Posterior vena cava (tissue), 2 donors: ENCODE measurements at regions of chr4 and their contacts with region 1.

Region 1: GRCh38 chr4:173135241-173135847 is 33.3 kb upstream of the GALNT7 start:
- DNase-seq: no peak

Region 2: GRCh38 chr4:172096786-172097185 is 1038.6 kb before region 1 on chr4:
- intact Hi-C with region 1: loop called in 1 of 2 experiments (anchors 5 kb)
- DNase-seq: no peak

Region 3: GRCh38 chr4:173209473-173209915 is 74.2 kb after region 1 on chr4:
- intact Hi-C with region 1: loop called in 1 of 2 experiments (anchors 2 kb)
- DNase-seq: no peak

Region 4: DNA sequence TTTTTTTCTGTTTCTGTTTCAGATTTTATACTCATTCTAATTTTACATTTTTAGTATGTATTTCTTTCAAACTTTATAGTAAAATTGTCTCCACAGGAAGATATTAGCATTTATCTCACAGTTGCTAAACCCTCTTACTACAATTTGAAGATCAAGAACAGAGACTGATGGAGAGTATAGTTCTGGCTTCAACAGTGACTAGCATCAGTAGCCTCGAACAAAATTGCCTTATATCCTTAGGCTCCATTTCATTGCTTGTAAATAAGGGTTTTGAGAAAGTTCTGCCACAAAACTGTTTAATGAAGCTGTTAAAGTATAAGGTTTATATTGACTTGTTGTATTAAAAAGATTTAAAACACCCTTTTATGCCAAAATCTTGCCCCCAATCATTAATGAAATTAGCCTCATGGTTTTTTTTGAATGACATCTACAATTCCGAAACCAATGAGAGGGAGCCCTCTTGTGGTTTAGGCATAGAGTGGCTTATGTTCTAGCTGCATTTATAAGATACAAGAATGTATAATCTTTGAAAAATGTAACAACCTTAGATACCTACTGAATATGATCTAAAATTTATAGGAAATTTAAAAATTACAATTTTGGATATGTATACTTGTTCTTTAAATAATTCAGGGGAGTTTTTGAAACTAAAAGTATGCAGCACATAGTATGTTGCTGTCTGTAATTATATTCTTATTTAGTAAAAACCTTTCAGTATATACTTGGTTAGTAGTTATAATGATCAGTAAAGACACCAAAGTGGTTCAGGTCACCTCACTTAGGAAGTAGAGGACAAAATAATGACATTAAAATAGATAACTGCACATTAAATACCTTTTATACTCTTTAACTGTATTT is 1496.8 kb after region 1 on chr4:
- intact Hi-C with region 1: no loop called
- DNase-seq: no peak